ENCODE measurements at regions of chrX and their contacts with region 1.

Region 1: DNA sequence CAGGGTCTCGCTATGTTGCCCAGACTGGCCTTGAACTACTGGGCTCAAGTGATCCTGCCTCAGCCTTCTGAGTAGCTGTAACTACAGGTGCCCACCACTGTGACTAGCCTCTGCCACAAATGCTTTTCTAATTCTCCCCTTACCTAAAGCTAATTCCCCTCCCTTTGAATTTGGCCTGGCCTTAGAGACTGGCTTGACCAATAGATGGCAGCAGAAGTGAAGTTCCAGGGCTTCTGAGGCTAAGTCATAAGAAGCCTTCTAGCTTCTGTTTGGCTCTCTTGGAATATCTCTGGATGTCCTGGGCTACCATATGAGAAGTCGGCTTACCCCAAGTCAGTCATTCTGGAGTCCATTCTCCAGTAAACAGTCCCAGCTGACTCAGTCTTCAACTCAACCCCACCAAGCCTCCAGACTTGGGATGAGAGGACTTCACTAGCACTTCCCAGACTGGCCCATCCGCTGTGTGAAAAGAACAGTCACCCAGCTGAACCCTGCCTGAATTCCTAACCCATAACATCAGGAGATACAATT is 61.0 kb downstream of the HPRT1 start:
- DNase-seq: peak; percentile 48 to 66
- H3K4me3 ChIP-seq: no peak overlapping the region
- H3K27ac ChIP-seq: no peak overlapping the region
- H3K4me1 ChIP-seq: peaks cover 11% of the 10 kb centered on the region; the same call in 1 of the 2 replicates
- H3K27me3 ChIP-seq: no peaks in the 10 kb centered on the region
- CTCF ChIP-seq: peak; percentile 78

Region 2: GRCh38 chrX:133142349-133142748 is 1378.6 kb before region 1 on chrX:
- CTCF ChIA-PET with region 1: no interaction called
- POLR2A ChIA-PET with region 1: no interaction called
- intact Hi-C with region 1: no loop called
- DNase-seq: no peak
- H3K4me3 ChIP-seq: no peak overlapping the region
- H3K27ac ChIP-seq: no peak overlapping the region
- H3K4me1 ChIP-seq: no peaks in the 10 kb centered on the region
- H3K27me3 ChIP-seq: no peaks in the 10 kb centered on the region
- CTCF ChIP-seq: no peak

Region 3: GRCh38 chrX:134718105-134718965 is 197.4 kb after region 1 on chrX:
- CTCF ChIA-PET with region 1: no interaction called
- POLR2A ChIA-PET with region 1: no interaction called
- intact Hi-C with region 1: loop called (anchors 1 kb)
- DNase-seq: peak; percentile 85 to 100
- H3K4me3 ChIP-seq: no peak overlapping the region
- H3K27ac ChIP-seq: peak overlapping the region; percentile 64
- H3K4me1 ChIP-seq: peaks cover 26% of the 10 kb centered on the region
- H3K27me3 ChIP-seq: no peaks in the 10 kb centered on the region
- CTCF ChIP-seq: peak; percentile 24; the same call in 1 of the 2 replicates

Region 4: DNA sequence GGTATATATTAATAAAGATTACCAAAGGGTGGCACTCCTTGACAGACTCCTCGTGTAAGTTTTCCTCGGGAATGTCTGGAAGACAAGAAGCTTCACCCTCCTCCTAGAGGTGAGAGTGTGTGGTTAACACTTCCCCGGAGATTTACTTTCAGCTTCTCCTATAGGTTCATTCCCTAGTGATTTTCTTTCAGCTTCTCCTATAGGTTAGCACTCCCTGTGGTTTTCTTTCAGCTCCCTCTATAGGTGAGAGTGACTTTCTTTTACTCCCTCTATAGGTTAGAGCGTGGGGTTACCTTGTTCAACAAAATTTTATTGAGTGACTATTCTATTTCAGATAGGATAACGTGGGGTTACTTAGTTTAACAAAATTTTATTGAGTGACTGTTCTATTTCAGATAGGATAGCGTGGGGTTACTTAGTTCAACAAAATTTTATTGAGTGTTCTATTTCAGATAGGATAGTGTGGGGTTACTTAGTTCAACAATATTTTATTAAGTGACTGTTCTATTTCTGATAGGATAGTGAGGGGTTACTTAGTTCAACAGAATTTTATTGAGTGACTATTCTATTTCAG is 243.4 kb after region 1 on chrX:
- CTCF ChIA-PET with region 1: interaction called, 5 read pairs
- POLR2A ChIA-PET with region 1: no interaction called
- intact Hi-C with region 1: loop called (anchors 5 kb)
- DNase-seq: peak in 1 of 2 experiments; percentile 76
- H3K4me3 ChIP-seq: no peak overlapping the region
- H3K27ac ChIP-seq: no peak overlapping the region
- H3K4me1 ChIP-seq: no peaks in the 10 kb centered on the region
- H3K27me3 ChIP-seq: no peaks in the 10 kb centered on the region
- CTCF ChIP-seq: peak; percentile 61